ENCODE measurements at regions of chr17 and their contacts with region 1.

Region 1: DNA sequence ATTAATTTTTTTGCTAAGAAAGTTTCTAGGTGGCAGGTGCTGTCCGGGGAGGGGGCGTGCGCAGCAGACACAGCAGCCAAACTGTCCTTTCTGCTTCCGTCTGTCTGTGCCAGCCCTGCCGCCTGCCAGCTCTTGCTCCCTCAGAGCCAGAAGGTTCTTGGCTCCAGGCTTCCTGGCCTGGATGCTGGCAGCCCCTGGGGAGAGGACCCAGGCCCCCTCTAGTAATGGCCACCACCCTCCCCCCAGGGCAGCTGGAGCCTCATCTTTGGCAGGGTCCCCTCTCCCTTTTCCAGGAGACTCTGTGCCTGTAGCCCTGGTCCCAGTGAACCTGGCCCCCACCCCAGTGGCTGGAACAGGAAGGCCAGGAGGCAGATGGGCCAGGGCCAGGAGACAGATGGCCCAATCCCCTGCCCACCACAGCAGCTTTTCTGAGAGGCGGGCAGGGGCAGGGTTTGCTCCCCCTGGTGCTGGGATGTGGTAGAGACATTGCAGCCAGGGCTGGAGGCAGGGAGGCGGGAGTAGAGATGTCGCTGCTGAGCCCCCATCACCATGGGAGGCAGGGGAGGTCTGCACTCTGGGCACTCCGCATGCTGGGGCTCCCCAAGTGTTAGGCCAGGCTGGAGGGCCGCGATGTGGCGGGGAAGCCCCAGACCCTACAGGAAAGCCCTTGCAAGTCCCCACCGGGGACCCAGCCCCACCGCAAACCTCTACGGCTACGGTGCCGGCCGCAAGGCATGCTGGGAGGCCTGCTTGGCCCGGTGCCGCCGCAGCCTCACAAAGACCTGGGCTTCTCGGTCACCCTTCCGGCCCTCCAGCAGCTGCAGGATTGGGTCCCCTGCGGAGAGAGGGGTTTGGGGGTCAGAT is 16.7 kb downstream of the UNC13D start:
- DNase-seq: peak; percentile 85
- ATAC-seq: peak; percentile 75
- H3K4me3 Mint-ChIP-seq: peak overlapping the region; percentile 53
- H3K27ac Mint-ChIP-seq: peak overlapping the region; percentile 87
- H3K4me1 Mint-ChIP-seq: peaks cover 14% of the 10 kb centered on the region
- H3K27me3 Mint-ChIP-seq: no peaks in the 10 kb centered on the region

Region 2: DNA sequence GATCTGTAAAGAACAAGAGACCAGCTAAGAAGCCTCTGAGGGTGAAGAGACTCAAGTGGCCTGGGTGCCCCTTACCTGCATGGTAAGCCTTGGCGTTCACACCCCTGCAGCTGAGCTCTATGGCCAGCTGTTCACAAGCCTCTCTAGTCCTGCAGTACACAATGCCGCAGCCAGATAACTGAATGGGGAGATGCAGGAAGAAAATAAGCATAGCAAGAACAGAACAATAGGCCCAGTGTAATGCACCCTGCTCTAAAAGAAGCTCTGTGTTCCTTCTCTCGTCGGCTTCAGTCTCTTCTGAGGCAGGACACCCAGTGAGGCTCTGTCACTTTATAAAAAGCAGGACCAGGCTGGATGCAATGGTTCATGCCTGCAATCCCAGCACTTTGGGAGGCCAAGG is 166.0 kb before region 1 on chr17:
- CTCF ChIA-PET with region 1: no interaction called
- POLR2A ChIA-PET with region 1: no interaction called
- intact Hi-C with region 1: no loop called
- DNase-seq: no peak
- ATAC-seq: no peak
- H3K4me3 Mint-ChIP-seq: no peak overlapping the region
- H3K27ac Mint-ChIP-seq: no peak overlapping the region
- H3K4me1 Mint-ChIP-seq: peaks cover 9% of the 10 kb centered on the region
- H3K27me3 Mint-ChIP-seq: no peaks in the 10 kb centered on the region

Region 3: GRCh38 chr17:75795820-75796607 is 31.5 kb before region 1 on chr17:
- CTCF ChIA-PET with region 1: interaction called, 14 read pairs
- POLR2A ChIA-PET with region 1: no interaction called
- intact Hi-C with region 1: no loop called
- DNase-seq: no peak
- ATAC-seq: no peak
- H3K4me3 Mint-ChIP-seq: no peak overlapping the region
- H3K27ac Mint-ChIP-seq: no peak overlapping the region
- H3K4me1 Mint-ChIP-seq: peaks cover 20% of the 10 kb centered on the region
- H3K27me3 Mint-ChIP-seq: no peaks in the 10 kb centered on the region

Region 4: DNA sequence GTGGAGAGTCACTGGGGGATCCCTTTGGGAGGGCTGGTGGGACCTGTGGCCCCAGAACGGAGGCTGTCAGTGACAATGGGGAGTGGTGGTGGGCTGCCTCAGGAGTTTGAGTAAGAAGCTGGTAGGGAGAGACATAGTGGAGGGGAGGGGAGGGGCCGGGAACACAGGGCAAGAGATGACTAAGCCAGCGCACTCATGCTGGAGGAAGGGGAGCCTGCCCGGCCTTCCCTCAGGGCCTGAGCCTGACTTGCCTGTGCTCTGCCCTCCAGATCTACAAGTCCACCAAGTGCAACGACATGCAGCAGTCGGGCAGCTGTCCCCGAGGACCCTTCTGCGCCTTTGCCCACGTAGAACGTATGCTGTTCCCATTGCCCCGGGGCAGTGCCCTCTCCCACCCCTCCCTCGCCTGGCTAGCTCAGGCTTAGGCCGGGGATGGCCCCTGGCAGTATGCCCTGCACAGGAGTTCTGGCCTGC is 12.5 kb before region 1 on chr17:
- CTCF ChIA-PET with region 1: interaction called, 11 read pairs
- POLR2A ChIA-PET with region 1: interaction called, 4 read pairs
- intact Hi-C with region 1: no loop called
- DNase-seq: no peak
- ATAC-seq: no peak
- H3K4me3 Mint-ChIP-seq: no peak overlapping the region
- H3K27ac Mint-ChIP-seq: no peak overlapping the region
- H3K4me1 Mint-ChIP-seq: no peaks in the 10 kb centered on the region
- H3K27me3 Mint-ChIP-seq: no peaks in the 10 kb centered on the region

Measured in activated CD4-positive, alpha-beta T cell treated with anti-CD3 and anti-CD28 coated beads for 36 hours (primary cell).